ENCODE measurements at regions of chr5 and their contacts with region 1.

Region 1: DNA sequence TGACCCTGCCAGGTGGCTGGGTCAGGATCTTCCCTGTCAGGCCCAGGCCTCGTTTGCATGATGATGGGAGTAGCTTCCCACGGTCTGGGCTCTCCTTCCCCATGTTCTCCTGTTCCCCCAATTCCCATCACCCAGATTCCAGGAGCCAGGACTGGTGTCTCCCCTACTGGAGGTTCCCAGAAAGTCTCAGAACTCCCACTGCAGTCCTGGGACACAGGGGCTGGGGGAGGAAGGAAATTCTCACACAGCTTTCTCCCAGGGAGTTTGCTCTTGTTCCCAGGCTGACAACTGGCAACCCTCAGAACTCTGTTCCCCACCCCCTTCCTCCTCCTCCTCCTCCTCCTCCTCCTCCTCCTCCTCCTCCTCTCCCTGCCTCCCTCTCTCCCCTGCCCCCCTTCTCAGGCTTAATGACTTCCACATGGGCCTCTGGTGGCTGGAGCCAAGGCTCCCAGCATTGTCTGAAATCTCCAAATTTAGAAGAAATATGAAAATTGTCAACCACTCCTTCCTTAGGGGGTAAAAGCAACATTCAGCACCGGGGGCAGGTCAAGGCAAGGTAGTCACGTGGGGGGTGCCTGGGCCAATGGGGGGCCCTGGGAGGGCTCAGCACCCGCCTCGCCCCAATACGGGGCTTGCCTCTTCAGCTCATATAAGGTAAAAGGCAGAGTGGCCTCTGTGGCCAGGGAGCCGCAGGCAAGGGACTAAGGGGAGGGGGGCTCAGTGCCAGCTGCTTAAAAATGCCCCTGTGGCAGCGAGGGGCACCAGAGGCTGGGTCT is 27.3 kb upstream of the IL17B start:
- DNase-seq: peak; percentile 80 to 94
- H3K4me3 ChIP-seq: peak overlapping the region; percentile 64 to 87
- H3K27ac ChIP-seq: peak overlapping the region; percentile 88 to 90
- H3K4me1 ChIP-seq: peaks cover 16 to 27% of the 10 kb centered on the region in 2 donors
- H3K27me3 ChIP-seq: no peaks in the 10 kb centered on the region
- CTCF ChIP-seq: peak in 2 of 3 experiments; percentile 15 to 25

Region 2: GRCh38 chr5:149381987-149382340 is 24.4 kb before region 1 on chr5:
- intact Hi-C with region 1: loop called (anchors 1 kb)
- DNase-seq: peak in 1 of 2 donors; percentile 93
- H3K4me3 ChIP-seq: peak overlapping the region in 1 of 2 donors; percentile 55
- H3K27ac ChIP-seq: peak overlapping the region; percentile 93 to 98
- H3K4me1 ChIP-seq: peaks cover 37 to 80% of the 10 kb centered on the region in 2 donors
- H3K27me3 ChIP-seq: no peaks in the 10 kb centered on the region
- CTCF ChIP-seq: peak; percentile 93 to 98 (median 93)

Region 3: GRCh38 chr5:149387081-149387631 is 19.2 kb before region 1 on chr5:
- intact Hi-C with region 1: loop called (anchors 1 kb)
- DNase-seq: peak in 1 of 2 donors; percentile 80
- H3K4me3 ChIP-seq: peak overlapping the region in 1 of 2 donors; percentile 1
- H3K27ac ChIP-seq: peak overlapping the region; percentile 93 to 98
- H3K4me1 ChIP-seq: peaks cover 30 to 74% of the 10 kb centered on the region in 2 donors
- H3K27me3 ChIP-seq: no peaks in the 10 kb centered on the region
- CTCF ChIP-seq: no peak

Region 4: DNA sequence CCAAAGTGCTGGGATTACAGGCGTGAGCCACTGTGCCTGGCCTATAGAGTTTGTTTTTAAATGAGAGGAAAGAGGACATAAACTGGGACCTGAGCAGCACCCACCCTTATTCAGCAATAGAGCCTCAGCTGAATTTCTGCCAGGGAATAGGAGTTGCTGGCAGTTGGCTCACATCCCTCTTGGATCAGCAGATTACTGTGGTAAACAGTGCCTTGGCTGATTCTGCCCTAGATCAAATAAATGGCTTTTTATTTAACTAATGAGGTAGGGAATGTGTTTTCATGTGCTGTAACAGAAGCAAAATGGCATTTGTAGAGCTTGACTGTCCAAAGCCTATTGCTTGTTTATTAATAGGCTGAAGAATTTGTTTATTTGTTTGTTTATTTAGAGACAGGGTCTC is 177.0 kb after region 1 on chr5:
- intact Hi-C with region 1: no loop called
- DNase-seq: no peak
- H3K4me3 ChIP-seq: peak overlapping the region in 1 of 2 donors; percentile 4
- H3K27ac ChIP-seq: peak overlapping the region; percentile 28 to 39
- H3K4me1 ChIP-seq: peaks cover 14 to 27% of the 10 kb centered on the region in 2 donors
- H3K27me3 ChIP-seq: no peaks in the 10 kb centered on the region
- CTCF ChIP-seq: no peak